Activated naive CD4-positive, alpha-beta T cell treated with anti-CD3 and anti-CD28 coated beads for 36 hours (primary cell): ENCODE measurements at regions of chr1 and their contacts with region 1.

Region 1: DNA sequence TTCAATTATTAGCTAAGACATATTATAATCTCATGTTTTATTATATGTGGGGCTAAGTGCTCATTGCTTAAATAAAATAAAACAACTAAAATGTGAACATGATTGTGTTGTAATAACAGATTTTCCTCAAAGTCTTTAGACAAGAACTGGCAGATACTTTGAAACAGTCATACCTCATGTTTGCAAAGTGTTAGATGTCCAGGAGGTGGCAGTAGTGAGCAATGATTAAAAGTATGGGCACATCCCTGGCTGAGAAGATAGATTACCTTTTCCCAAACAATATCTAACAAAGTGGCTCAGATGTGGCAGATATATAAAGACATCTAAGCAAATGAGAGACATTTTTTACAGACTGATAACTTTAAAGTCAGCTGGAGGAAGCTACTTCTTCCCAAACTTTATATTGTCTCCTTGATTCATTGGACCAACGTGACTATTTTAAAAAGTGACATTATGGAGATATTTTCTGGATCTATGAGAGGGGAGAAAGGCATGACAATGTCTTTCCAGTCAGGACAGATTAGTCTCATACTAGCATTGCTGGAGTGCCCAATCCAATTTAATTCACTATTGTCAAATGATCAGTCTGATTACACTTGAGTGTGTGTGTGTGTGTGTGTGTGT is 269.8 kb downstream of the S1PR1 start:
- DNase-seq: peak; percentile 60
- H3K4me3 Mint-ChIP-seq: no peak overlapping the region
- H3K27ac Mint-ChIP-seq: no peak overlapping the region
- H3K4me1 Mint-ChIP-seq: no peaks in the 10 kb centered on the region
- H3K27me3 Mint-ChIP-seq: no peaks in the 10 kb centered on the region

Region 2: DNA sequence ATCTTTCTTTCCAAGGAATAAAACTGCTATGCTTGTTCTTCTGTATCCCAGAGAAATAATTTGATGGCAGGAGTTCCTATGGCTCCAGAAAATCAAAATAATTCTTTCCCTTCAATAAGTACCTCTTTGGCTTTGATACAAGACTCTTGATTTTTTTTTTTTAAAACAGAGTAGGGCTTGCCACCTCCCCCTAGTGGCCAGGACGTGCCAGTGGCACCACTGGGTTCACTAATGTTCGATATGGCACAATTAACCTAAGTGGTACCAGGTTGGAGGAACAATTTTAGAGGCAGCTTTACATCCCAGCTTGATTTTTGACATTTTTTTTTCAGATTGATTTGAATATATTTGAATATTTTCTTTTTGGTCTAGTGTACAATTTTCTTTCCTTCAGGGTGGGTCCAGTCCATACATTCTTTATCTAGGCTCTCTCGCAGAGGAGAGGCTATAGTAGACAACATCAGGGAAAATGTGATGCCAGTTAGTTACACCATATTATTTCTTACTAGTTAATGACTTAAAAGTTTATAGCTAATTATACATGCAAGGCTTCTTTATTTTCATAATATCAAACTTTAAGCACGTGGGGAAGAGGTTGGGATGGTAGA is 61.0 kb after region 1 on chr1:
- CTCF ChIA-PET with region 1: interaction called, 34 read pairs
- intact Hi-C with region 1: loop called (anchors 1 kb)
- DNase-seq: peak; percentile 64
- H3K4me3 Mint-ChIP-seq: no peak overlapping the region
- H3K27ac Mint-ChIP-seq: no peak overlapping the region
- H3K4me1 Mint-ChIP-seq: peaks cover 3% of the 10 kb centered on the region
- H3K27me3 Mint-ChIP-seq: peaks cover 2% of the 10 kb centered on the region